Endothelial cell of umbilical vein (primary cell): ENCODE measurements at regions of chr5 and their contacts with region 1.

Region 1: DNA sequence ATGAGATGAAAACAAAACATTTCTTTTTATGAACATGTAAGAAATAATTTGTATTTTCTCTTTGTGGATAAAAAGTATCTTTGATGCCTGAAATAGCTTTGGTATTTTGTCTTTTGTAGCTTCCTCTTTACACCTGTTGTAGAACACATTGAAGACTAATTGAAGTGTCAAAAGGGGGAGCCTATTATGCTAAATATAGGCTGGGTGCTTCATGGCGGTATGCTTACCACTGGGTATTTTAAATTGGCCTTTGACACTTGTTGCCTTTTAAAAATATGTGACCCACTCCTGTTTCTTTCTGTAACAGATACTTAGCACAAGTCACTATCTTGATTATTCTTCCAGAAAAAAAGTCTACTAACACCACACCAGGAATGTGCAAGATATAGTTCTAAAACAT is 226.4 kb downstream of the KIAA0825 start:
- DNase-seq: no peak
- H3K4me3 ChIP-seq: no peak overlapping the region
- H3K27ac ChIP-seq: no peak overlapping the region
- H3K4me1 ChIP-seq: no peaks in the 10 kb centered on the region
- H3K27me3 ChIP-seq: no peaks in the 10 kb centered on the region
- CTCF ChIP-seq: no peak
- POLR2A ChIP-seq: no peak

Region 2: DNA sequence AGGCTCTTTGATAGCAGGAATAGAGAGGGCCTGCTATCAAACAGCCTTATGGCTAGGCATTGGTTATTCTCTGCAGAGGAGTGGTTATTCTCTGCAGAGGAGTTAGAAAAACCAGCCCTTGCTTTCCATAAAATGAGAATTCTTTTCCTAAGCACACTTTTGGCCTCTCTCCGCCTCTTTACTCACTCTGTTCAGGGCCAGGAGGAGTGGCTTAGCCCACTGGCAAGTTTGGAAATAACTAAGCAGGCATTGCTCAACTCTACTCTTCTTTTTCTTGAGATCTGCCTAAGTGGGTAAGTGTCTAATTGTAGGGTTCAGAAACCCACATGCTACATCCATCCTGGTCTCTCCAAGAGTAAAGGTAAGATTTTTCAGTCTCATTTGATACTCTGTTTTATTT is 115.2 kb before region 1 on chr5:
- CTCF ChIA-PET with region 1: no interaction called
- POLR2A ChIA-PET with region 1: no interaction called
- dilution Hi-C with region 1: no loop called
- intact Hi-C with region 1: loop called (anchors 5 kb)
- DNase-seq: no peak
- H3K4me3 ChIP-seq: no peak overlapping the region
- H3K27ac ChIP-seq: no peak overlapping the region
- H3K4me1 ChIP-seq: no peaks in the 10 kb centered on the region
- H3K27me3 ChIP-seq: no peaks in the 10 kb centered on the region
- CTCF ChIP-seq: no peak
- POLR2A ChIP-seq: no peak